ENCODE measurements at regions of chr6 and their contacts with region 1.

Region 1: DNA sequence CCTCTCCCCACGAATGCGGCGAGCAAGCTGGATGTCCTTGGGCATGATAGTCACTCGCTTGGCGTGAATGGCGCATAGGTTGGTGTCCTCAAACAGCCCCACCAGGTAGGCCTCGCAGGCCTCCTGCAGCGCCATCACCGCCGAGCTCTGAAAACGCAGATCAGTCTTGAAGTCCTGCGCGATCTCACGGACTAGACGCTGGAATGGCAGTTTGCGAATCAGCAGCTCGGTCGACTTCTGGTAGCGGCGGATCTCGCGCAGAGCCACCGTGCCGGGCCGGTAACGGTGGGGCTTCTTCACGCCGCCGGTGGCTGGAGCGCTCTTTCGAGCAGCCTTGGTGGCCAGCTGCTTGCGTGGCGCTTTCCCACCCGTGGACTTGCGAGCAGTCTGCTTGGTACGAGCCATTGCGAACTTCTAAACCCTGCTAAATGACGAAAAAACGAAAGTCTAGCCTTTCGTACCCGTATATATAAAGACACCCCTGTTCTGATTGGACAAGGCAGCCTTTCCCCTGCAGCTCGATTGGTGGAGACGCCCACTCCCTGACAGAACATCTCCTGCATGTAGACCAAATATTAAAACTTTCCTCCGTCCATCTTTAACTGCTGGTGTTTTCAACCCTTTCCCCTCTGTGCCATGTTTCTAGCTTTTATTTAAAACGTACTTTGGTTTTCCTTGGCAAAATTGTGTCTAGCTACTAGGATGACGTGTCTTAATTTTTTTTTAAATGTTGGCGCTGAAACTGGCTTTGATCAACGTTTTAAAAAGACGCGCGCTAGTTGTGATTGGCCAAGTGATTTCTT is 109.8 kb downstream of the HFE start:
- DNase-seq: peak; percentile 55 to 95 (median 86)
- ATAC-seq: peak; percentile 57 to 62
- H3K4me3 Mint-ChIP-seq: peak overlapping the region; percentile 88 to 99 (median 96)
- H3K27ac Mint-ChIP-seq: peak overlapping the region; percentile 94 to 99 (median 98)
- H3K4me1 Mint-ChIP-seq: peaks cover 25 to 46% (median 42%) of the 10 kb centered on the region in 4 donors
- H3K27me3 Mint-ChIP-seq: no peaks in the 10 kb centered on the region

Region 2: GRCh38 chr6:26031595-26032339 is 165.3 kb before region 1 on chr6:
- POLR2A ChIA-PET with region 1: interaction called, 56 read pairs
- DNase-seq: peak; percentile 71 to 96 (median 91)
- ATAC-seq: peak; percentile 67 to 71
- H3K4me3 Mint-ChIP-seq: peak overlapping the region; percentile 94 to 97 (median 95)
- H3K27ac Mint-ChIP-seq: peak overlapping the region; percentile 93 to 99 (median 96)
- H3K4me1 Mint-ChIP-seq: peaks cover 11 to 52% (median 41%) of the 10 kb centered on the region in 4 donors
- H3K27me3 Mint-ChIP-seq: peaks cover 0 to 2% (median 0%) of the 10 kb centered on the region in 5 donors

Region 3: DNA sequence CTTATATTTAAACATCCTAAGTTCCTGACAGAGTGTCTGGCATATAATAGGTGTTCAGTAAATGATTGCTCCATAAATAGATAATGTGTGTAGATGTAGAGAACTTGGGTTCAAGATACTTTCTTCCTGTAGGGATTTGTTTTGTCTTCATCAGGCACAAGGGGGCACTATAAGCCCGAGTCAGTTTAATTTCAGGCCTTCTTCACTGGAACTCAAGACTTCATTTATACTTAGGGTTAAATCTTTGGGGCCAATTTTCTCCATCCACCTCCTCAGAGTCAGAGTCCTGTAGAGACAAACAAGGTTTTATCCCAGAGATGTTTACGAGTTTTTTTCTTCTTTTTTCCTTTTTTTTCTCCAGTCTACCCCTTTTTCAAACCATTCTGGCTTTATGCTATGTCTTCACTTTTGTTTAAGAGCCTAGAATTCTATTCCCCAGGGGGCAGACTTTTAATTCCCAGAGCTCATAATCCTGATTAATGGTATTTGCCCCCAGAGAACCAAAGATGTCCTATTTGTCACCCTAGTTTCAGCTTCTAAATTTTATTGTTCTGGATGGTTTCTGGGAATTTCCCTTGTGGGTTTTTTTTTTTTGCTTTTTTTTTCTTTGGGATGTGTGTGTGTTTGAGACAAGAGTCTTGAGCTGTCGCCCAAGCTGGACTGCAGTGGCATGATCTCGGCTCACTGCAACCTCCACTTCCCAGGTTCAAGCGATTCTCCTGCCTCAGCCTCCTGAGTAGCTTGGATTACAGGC is 21.4 kb before region 1 on chr6:
- POLR2A ChIA-PET with region 1: interaction called, 288 read pairs
- DNase-seq: peak in 9 of 10 donors; percentile 21 to 76 (median 59)
- ATAC-seq: no peak
- H3K4me3 Mint-ChIP-seq: peak overlapping the region in 5 of 10 donors; percentile 33 to 62 (median 51)
- H3K27ac Mint-ChIP-seq: peak overlapping the region; percentile 11 to 82 (median 59)
- H3K4me1 Mint-ChIP-seq: peaks cover 15 to 43% (median 34%) of the 10 kb centered on the region in 4 donors
- H3K27me3 Mint-ChIP-seq: no peaks in the 10 kb centered on the region

Region 4: GRCh38 chr6:26240154-26241032 is 43.3 kb after region 1 on chr6:
- POLR2A ChIA-PET with region 1: interaction called, 360 read pairs
- DNase-seq: peak; percentile 39 to 90 (median 80)
- ATAC-seq: peak; percentile 82 to 85
- H3K4me3 Mint-ChIP-seq: peak overlapping the region; percentile 82 to 95 (median 88)
- H3K27ac Mint-ChIP-seq: peak overlapping the region; percentile 92 to 99 (median 98)
- H3K4me1 Mint-ChIP-seq: peaks cover 9 to 25% (median 22%) of the 10 kb centered on the region in 4 donors
- H3K27me3 Mint-ChIP-seq: no peaks in the 10 kb centered on the region

Region 5: DNA sequence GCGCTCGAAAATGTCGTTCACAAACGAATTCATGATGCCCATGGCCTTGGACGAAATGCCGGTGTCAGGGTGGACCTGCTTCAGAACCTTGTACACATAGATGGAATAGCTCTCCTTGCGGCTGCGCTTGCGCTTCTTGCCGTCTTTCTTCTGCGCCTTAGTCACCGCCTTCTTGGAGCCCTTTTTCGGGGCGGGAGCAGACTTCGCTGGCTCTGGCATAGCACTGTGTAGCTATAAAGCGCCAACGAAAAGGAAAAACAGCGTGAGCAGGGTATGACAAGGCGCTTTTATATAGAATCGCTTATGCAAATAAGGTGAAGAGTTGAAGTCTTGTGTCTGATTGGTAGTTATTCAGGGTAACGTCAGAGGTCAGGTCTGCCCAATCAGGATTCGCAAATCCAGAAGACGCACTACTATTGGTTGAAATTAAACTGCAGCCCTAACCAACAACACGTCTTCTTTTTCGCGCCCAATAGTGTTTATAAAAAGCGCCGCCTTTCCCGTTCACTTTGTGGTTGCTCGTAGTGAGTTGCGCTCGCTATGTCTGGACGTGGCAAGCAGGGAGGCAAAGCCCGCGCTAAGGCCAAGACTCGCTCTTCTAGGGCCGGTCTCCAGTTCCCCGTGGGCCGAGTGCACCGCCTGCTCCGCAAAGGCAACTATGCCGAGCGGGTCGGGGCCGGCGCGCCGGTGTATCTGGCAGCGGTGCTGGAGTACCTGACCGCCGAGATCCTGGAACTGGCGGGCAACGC is 935.7 kb after region 1 on chr6:
- POLR2A ChIA-PET with region 1: interaction called, 51 read pairs
- DNase-seq: peak; percentile 69 to 98 (median 94)
- ATAC-seq: peak; percentile 84
- H3K4me3 Mint-ChIP-seq: no peak overlapping the region
- H3K27ac Mint-ChIP-seq: no peak overlapping the region
- H3K4me1 Mint-ChIP-seq: peaks cover 5 to 20% (median 10%) of the 10 kb centered on the region in 4 donors
- H3K27me3 Mint-ChIP-seq: no peaks in the 10 kb centered on the region

Region 6: GRCh38 chr6:27864906-27865849 is 1668.1 kb after region 1 on chr6:
- POLR2A ChIA-PET with region 1: interaction called, 10 read pairs
- DNase-seq: peak; percentile 43 to 91 (median 80)
- ATAC-seq: peak; percentile 81
- H3K4me3 Mint-ChIP-seq: peak overlapping the region; percentile 87 to 99 (median 98)
- H3K27ac Mint-ChIP-seq: peak overlapping the region; percentile 87 to 99 (median 96)
- H3K4me1 Mint-ChIP-seq: peaks cover 15 to 45% (median 39%) of the 10 kb centered on the region in 4 donors
- H3K27me3 Mint-ChIP-seq: no peaks in the 10 kb centered on the region

Measured in naive thymus-derived CD8-positive, alpha-beta T cell (primary cell).